HepG2 (cell line): ENCODE measurements at regions of chr20 and their contacts with region 1.

Region 1: GRCh38 chr20:31572701-31573554 is 32.2 kb upstream of the ID1 start:
- DNase-seq: peak; percentile 100
- ATAC-seq: peak; percentile 74
- H3K4me3 ChIP-seq: peak overlapping the region; percentile 70 to 88 (median 80)
- H3K27ac ChIP-seq: peak overlapping the region; percentile 86
- H3K4me1 ChIP-seq: peaks cover 68% of the 10 kb centered on the region
- H3K27me3 ChIP-seq: no peaks in the 10 kb centered on the region; a peak in 1 of 5 replicates
- CTCF ChIP-seq: no peak; the same call in 1 of the 2 replicates
- EP300 ChIP-seq: peak; percentile 89 to 96; a peak in 3 of 4 replicates
- POLR2A ChIP-seq: peak; percentile 80 to 89
- RAD21 ChIP-seq: peak; percentile 97

Region 2: GRCh38 chr20:31547017-31547675 is 25.8 kb before region 1 on chr20:
- CTCF ChIA-PET with region 1: no interaction called
- POLR2A ChIA-PET with region 1: interaction called, 11 read pairs
- in situ Hi-C with region 1: no loop called
- intact Hi-C with region 1: no loop called
- DNase-seq: peak; percentile 88
- ATAC-seq: peak; percentile 79
- H3K4me3 ChIP-seq: peak overlapping the region; percentile 66 to 72 (median 68)
- H3K27ac ChIP-seq: peak overlapping the region; percentile 92
- H3K4me1 ChIP-seq: peaks cover 26% of the 10 kb centered on the region
- H3K27me3 ChIP-seq: no peaks in the 10 kb centered on the region
- CTCF ChIP-seq: peak; percentile 35
- EP300 ChIP-seq: no peak
- POLR2A ChIP-seq: peak; percentile 78 to 89
- RAD21 ChIP-seq: peak; percentile 37; the same call in 1 of the 2 replicates

Region 3: DNA sequence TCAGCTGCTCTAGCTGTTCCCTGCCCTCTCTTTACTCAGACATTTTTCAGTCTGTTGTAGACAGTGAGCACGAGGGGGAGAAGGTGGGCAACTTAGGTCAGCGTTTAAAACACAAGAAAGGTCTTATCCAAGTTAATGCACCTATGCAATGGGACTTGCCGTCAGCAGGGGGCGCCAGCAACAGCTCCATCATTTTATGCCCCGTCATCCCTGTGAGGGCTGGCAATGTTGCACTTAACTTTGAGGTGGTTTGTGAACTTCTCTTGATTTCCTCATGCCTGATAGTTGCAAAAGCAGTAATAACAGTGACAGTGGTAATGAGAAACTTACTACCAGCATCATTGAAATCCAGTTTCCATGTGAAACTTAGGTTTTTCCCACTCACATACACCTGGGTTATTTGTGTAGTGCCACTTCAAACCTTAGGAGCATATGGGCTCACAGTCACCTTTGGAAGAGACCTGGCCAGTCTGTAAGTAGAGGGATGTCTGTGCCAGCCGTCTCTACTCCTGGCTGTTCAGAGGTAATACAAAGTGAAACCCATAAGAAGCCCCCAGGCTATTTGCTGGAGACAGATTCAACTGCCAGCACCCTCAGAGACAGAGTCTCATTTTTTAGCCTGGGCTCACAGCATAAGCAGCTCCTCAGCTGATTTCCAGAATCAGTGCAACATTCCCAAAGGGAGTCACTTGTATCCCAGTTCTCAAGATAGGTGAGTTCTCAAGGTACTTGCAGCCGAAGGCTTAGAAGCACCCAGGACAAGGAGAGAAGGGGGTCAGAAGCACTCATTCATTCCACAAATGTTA is 12.6 kb before region 1 on chr20:
- CTCF ChIA-PET with region 1: interaction called, 18 read pairs
- POLR2A ChIA-PET with region 1: interaction called, 64 read pairs
- in situ Hi-C with region 1: no loop called
- intact Hi-C with region 1: loop called (anchors 1 kb)
- DNase-seq: peak; percentile 83
- ATAC-seq: peak; percentile 51
- H3K4me3 ChIP-seq: no peak overlapping the region
- H3K27ac ChIP-seq: peak overlapping the region; percentile 65
- H3K4me1 ChIP-seq: peaks cover 31% of the 10 kb centered on the region
- H3K27me3 ChIP-seq: no peaks in the 10 kb centered on the region
- CTCF ChIP-seq: peak; percentile 95
- EP300 ChIP-seq: peak in 1 of 2 experiments; percentile 33; a peak in 1 of 4 replicates
- POLR2A ChIP-seq: no peak
- RAD21 ChIP-seq: peak; percentile 85

Region 4: GRCh38 chr20:31587545-31588389 is 14.8 kb after region 1 on chr20:
- CTCF ChIA-PET with region 1: interaction called, 11 read pairs
- POLR2A ChIA-PET with region 1: interaction called, 97 read pairs
- in situ Hi-C with region 1: no loop called
- intact Hi-C with region 1: loop called (anchors 1 kb)
- DNase-seq: no peak
- ATAC-seq: peak; percentile 78
- H3K4me3 ChIP-seq: peak overlapping the region; percentile 68 to 86 (median 84)
- H3K27ac ChIP-seq: peak overlapping the region; percentile 50
- H3K4me1 ChIP-seq: peaks cover 47% of the 10 kb centered on the region
- H3K27me3 ChIP-seq: no peaks in the 10 kb centered on the region
- CTCF ChIP-seq: no peak
- EP300 ChIP-seq: no peak
- POLR2A ChIP-seq: 0 out of 4 replicates have a peak, but pooled peaks of 1 of the 2 experiments have one; percentile 26
- RAD21 ChIP-seq: 0 out of 2 replicates have a peak, but pooled peaks have one; percentile 58

Region 5: GRCh38 chr20:31595654-31596411 is 22.9 kb after region 1 on chr20:
- CTCF ChIA-PET with region 1: interaction called, 11 read pairs
- POLR2A ChIA-PET with region 1: interaction called, 97 read pairs
- in situ Hi-C with region 1: no loop called
- intact Hi-C with region 1: loop called (anchors 1 kb)
- DNase-seq: peak; percentile 96
- ATAC-seq: peak; percentile 78
- H3K4me3 ChIP-seq: peak overlapping the region; percentile 48 to 74 (median 63)
- H3K27ac ChIP-seq: peak overlapping the region; percentile 90
- H3K4me1 ChIP-seq: peaks cover 62% of the 10 kb centered on the region
- H3K27me3 ChIP-seq: no peaks in the 10 kb centered on the region; a peak in 1 of 5 replicates
- CTCF ChIP-seq: peak; percentile 22; the same call in 1 of the 2 replicates
- EP300 ChIP-seq: peak; percentile 91 to 92; a peak in 3 of 4 replicates
- POLR2A ChIP-seq: peak; percentile 54 to 70
- RAD21 ChIP-seq: peak; percentile 72

Region 6: GRCh38 chr20:31704225-31705119 is 131.5 kb after region 1 on chr20:
- CTCF ChIA-PET with region 1: no interaction called
- POLR2A ChIA-PET with region 1: interaction called, 13 read pairs
- in situ Hi-C with region 1: no loop called
- intact Hi-C with region 1: no loop called
- DNase-seq: peak; percentile 100
- ATAC-seq: peak; percentile 88
- H3K4me3 ChIP-seq: peak overlapping the region in 1 of 3 experiments; percentile 38; a peak in 1 of 6 replicates
- H3K27ac ChIP-seq: peak overlapping the region; percentile 87
- H3K4me1 ChIP-seq: peaks cover 99% of the 10 kb centered on the region
- H3K27me3 ChIP-seq: no peaks in the 10 kb centered on the region
- CTCF ChIP-seq: no peak
- EP300 ChIP-seq: peak; percentile 99 to 100
- POLR2A ChIP-seq: peak; percentile 56 to 73; a peak in 3 of 4 replicates
- RAD21 ChIP-seq: peak; percentile 43